ENCODE measurements at regions of chr5 and their contacts with region 1.

Region 1: GRCh38 chr5:112384523-112384922 is 34.6 kb downstream of the EPB41L4A start:
- DNase-seq: no peak
- H3K4me3 Mint-ChIP-seq: no peak overlapping the region
- H3K27ac Mint-ChIP-seq: no peak overlapping the region
- H3K4me1 Mint-ChIP-seq: peaks cover 14% of the 10 kb centered on the region
- H3K27me3 Mint-ChIP-seq: no peaks in the 10 kb centered on the region
- CTCF ChIP-seq: no peak

Region 2: GRCh38 chr5:111966290-111966689 is 418.2 kb before region 1 on chr5:
- CTCF ChIA-PET with region 1: interaction called, 10 read pairs
- intact Hi-C with region 1: no loop called
- DNase-seq: no peak
- H3K4me3 Mint-ChIP-seq: no peak overlapping the region
- H3K27ac Mint-ChIP-seq: no peak overlapping the region
- H3K4me1 Mint-ChIP-seq: no peaks in the 10 kb centered on the region
- H3K27me3 Mint-ChIP-seq: no peaks in the 10 kb centered on the region
- CTCF ChIP-seq: no peak

Measured in Calu3 (cell line).